ENCODE measurements at regions of chr2 and their contacts with region 1.

Region 1: GRCh38 chr2:136117909-136118818 is at the start of gene CXCR4:
- DNase-seq: peak; percentile 90
- ATAC-seq: peak; percentile 34
- H3K4me3 Mint-ChIP-seq: peak within 1 kb of the TSS; percentile 94
- H3K27ac Mint-ChIP-seq: peak within 1 kb of the TSS; percentile 93
- H3K4me1 Mint-ChIP-seq: peaks cover 60% of the 10 kb centered on the region
- H3K27me3 Mint-ChIP-seq: peaks cover 2% of the 10 kb centered on the region
- total RNA-seq, gene CXCR4: 75.4 to 89.3 TPM

Region 2: DNA sequence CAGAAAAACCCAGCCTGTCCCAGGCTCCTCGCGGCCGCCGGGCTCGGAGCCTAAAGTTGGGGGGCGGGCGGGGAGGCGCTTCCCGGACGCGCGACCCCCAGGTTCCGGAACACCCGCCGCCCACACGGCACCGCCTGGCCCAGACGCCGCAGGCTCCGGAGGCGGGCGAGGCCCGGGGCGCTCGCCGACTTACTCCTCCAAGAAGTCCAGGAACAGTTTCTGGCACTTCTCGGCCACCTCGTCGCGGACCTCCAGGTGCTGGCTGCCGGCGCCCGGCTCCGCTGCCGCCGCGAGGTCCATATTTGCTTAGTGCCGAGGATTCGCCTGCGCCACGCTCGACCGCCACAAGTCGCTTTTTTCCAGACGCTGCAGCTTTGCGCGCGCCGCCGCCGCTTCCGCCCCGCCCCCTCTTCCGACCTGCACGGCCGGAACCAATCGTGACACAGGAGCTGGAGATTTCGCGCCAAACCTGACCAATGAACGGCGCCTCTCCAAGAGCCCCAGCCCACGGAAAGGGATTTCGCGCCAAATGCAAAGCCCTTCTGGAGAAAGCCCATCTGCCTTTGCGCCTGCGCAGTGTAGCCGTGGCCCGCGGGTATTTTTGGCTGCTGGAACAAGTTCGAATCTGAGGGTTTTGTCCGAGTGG is 242.0 kb before region 1 on chr2 and contains the start of gene MCM6:
- CTCF ChIA-PET with region 1: no interaction called
- POLR2A ChIA-PET with region 1: no interaction called
- intact Hi-C with region 1: loop called in 1 of 2 experiments (anchors 1 kb)
- DNase-seq: peak; percentile 100
- ATAC-seq: peak; percentile 88
- H3K4me3 Mint-ChIP-seq: peak within 1 kb of the TSS; percentile 86
- H3K27ac Mint-ChIP-seq: peak within 1 kb of the TSS; percentile 96
- H3K4me1 Mint-ChIP-seq: peaks cover 44% of the 10 kb centered on the region
- H3K27me3 Mint-ChIP-seq: no peaks in the 10 kb centered on the region
- total RNA-seq, gene MCM6: 228 to 276 TPM

Region 3: DNA sequence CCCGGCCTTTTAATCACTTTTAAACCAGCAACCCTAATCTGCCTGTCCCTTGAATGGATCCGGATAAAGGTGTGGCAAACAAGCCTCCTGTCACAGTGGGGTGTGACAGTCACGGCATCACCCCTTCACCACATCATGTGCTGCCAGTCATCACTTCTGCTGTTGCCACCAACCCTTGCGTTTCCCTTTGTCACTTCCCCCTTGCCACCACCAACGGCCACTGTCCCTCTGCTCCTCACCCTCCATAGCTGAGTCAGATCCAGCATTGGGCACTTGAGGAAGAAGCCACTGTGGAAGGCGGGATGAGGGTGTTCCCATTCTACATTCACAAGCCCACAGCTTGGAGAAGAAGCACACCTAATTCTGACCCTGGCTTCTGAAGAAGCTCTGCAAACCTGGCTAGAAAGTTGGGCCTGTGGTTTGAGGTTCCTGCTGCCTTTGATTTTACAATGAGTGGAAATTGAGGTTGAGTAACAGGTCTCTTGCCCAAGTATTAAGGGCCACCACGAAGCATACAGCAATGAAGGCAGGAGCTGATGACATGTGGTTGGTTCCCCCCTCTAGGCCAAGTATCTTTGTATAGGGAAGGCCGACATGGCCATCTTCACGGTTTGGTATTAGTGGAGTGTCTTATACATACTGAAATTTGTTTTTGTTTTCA is 109.8 kb before region 1 on chr2:
- CTCF ChIA-PET with region 1: interaction called, 3 read pairs
- POLR2A ChIA-PET with region 1: no interaction called
- intact Hi-C with region 1: loop called in 1 of 2 experiments (anchors 1 kb)
- DNase-seq: peak; percentile 74
- ATAC-seq: peak; percentile 91
- H3K4me3 Mint-ChIP-seq: no peak overlapping the region
- H3K27ac Mint-ChIP-seq: peak overlapping the region; percentile 47
- H3K4me1 Mint-ChIP-seq: peaks cover 31% of the 10 kb centered on the region
- H3K27me3 Mint-ChIP-seq: no peaks in the 10 kb centered on the region

Region 4: DNA sequence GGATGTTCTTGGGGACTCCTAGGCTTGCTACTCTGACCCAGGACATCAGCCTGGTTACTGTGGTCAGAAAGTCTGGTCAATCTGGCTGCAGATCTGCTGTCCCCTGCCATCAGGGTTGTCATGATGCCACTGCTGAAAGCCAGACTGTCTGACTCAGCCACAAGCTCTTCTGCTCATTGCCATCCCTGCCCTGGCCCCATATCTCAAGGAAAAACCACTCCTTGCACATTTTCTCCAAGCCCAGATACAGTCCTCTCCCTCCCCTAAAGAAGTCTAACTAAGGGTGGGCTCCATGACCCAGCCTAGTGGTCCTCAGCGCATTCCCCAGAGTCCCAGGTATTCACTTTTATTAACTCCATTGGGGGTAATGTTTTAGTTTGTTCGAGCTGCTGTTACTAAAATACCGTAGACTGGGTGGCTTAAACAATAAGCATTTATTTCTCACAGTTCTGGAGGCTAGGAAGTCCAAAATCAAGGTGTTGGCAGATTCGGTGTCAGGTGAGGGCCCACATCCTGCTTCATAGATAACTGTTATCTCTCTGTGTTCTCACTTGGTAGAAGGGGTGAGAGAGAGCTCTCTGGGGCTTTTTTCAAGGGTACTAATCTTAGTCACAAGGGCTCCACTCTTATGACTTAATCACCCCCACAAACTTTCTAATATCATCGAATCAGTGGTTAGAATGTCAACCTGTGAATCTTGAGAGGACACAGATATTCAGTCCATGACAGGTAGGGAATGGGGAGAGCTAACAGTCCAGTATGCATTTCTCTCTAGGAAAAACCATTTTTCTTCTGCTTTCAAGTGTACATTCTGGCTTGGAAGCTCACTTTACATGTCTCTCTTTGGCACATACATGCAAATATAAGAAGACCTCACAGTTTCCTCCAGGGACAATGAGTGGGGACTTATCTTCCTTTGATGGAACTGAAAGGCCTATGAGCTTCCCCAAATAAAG is 94.5 kb after region 1 on chr2:
- CTCF ChIA-PET with region 1: no interaction called
- POLR2A ChIA-PET with region 1: no interaction called
- intact Hi-C with region 1: loop called in 1 of 2 experiments (anchors 5 kb)
- DNase-seq: peak; percentile 51
- ATAC-seq: peak; percentile 95
- H3K4me3 Mint-ChIP-seq: no peak overlapping the region
- H3K27ac Mint-ChIP-seq: peak overlapping the region; percentile 72
- H3K4me1 Mint-ChIP-seq: peaks cover 42% of the 10 kb centered on the region
- H3K27me3 Mint-ChIP-seq: no peaks in the 10 kb centered on the region

Region 5: DNA sequence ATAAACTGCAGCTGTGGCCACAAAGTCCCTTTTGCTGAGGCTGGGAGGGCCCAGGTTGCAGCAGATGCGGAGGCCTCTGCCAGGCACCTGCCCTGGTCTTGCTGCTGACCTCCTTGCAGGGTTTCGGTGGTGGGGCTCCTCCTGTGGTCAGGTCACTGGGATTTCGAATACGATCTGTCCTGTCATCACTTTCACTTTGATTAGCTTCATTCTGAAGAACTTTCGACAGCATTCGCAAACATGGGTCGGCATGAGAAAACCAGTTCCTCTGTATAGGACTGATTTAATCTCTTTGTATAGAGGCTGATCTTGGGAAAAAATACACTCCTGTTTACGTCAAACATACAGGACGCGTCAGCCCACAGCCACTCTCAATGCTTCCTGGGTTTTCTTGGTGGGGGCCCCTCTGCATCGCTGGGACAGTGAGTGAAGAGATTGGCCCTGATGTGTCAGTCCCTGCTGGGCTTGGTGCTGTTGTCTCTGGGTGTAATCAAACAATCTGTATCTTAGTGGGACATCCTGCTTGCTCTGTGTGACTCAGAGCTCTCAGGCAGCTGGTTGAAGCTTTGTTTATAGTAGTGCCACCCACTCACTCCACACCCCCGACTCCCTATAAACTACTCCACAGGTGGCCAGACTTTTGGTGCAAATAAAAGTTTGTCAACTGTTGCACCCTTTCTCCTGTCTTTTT is 209.1 kb after region 1 on chr2:
- CTCF ChIA-PET with region 1: no interaction called
- POLR2A ChIA-PET with region 1: interaction called, 5 read pairs
- intact Hi-C with region 1: loop called (anchors 1 to 2 kb)
- DNase-seq: peak; percentile 88
- ATAC-seq: peak; percentile 95
- H3K4me3 Mint-ChIP-seq: peak overlapping the region; percentile 56
- H3K27ac Mint-ChIP-seq: peak overlapping the region; percentile 92
- H3K4me1 Mint-ChIP-seq: peaks cover 69% of the 10 kb centered on the region
- H3K27me3 Mint-ChIP-seq: no peaks in the 10 kb centered on the region

Measured in activated CD4-positive, alpha-beta T cell treated with anti-CD3 and anti-CD28 coated beads for 36 hours (primary cell).